BJ (cell line): ENCODE measurements at regions of chr10 and their contacts with region 1.

Region 1: DNA sequence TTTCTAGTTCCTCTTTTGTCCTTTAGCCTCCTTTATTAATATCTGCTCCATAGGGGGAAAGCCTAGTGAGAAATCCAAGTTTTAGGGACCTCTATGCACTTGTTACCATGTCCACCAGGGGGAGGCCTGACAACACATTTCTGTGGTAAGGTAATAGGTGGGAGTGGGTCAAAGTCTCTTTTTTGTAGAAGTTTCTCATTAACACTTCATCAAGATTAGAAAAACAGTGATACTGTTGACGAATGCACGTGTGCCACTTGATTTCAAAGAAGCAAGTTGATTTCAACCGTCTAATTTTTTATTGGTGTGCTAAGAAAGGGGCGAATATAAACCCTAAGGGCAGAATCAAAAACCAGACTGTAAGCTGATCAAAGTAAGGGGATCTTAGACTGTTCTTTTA is 30.6 kb downstream of the CISD1 start:
- DNase-seq: no peak
- H3K4me3 ChIP-seq: no peak overlapping the region
- H3K27me3 ChIP-seq: peaks cover 1% of the 10 kb centered on the region; the same call in 1 of the 2 replicates
- CTCF ChIP-seq: peak; percentile 89

Region 2: DNA sequence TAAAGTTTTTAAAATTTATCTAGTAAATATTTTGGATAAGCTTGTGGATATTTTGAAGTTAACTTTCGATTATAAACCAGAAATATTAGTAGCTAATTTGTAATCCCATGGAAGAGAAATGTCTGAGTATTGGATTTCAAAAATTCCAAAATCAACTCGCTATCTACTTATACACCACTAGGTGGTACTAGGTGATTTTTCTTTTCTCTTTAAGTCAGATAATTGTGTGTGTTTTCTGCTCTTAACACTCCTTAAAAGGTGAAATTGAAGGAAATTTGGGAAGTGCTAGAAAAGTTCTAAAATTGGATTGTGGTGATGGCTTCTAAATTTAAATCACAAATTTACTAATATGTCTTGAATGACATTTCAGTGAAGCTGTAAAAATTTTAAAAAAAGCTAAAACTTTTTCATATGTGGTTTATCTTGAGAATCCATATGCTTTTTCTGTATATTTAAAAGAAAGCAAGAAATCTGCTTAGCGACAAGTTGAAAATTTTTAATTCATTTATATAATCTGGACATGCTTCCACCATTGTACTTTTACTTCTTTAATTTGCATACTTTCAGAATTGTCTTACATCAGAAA is 122.1 kb before region 1 on chr10:
- CTCF ChIA-PET with region 1: interaction called, 15 read pairs
- POLR2A ChIA-PET with region 1: no interaction called
- DNase-seq: no peak
- H3K4me3 ChIP-seq: no peak overlapping the region
- H3K27me3 ChIP-seq: no peaks in the 10 kb centered on the region
- CTCF ChIP-seq: peak; percentile 54

Region 3: GRCh38 chr10:58319599-58319998 is 20.0 kb after region 1 on chr10:
- CTCF ChIA-PET with region 1: interaction called, 15 read pairs
- POLR2A ChIA-PET with region 1: no interaction called
- DNase-seq: no peak
- H3K4me3 ChIP-seq: no peak overlapping the region
- H3K27me3 ChIP-seq: no peaks in the 10 kb centered on the region
- CTCF ChIP-seq: no peak

Region 4: GRCh38 chr10:58384999-58385783 is 85.6 kb after region 1 on chr10 and contains the start of gene TFAM:
- CTCF ChIA-PET with region 1: interaction called, 14 read pairs
- POLR2A ChIA-PET with region 1: no interaction called
- DNase-seq: peak; percentile 52
- H3K4me3 ChIP-seq: peak within 1 kb of the TSS; percentile 71
- H3K27me3 ChIP-seq: no peaks in the 10 kb centered on the region
- CTCF ChIP-seq: peak; percentile 59
- polyA plus RNA-seq, gene TFAM: 9.0 and 11.5 TPM in 2 replicates

Region 5: GRCh38 chr10:58393317-58393716 is 93.7 kb after region 1 on chr10:
- CTCF ChIA-PET with region 1: interaction called, 21 read pairs
- POLR2A ChIA-PET with region 1: no interaction called
- DNase-seq: no peak
- H3K4me3 ChIP-seq: no peak overlapping the region
- H3K27me3 ChIP-seq: no peaks in the 10 kb centered on the region
- CTCF ChIP-seq: 0 out of 2 replicates have a peak, but pooled peaks have one; percentile 11